Activated CD8-positive, alpha-beta T cell treated with anti-CD3 and anti-CD28 coated beads, Interleukin-2, amount 10 ng/mL, durations not matched to agents 7 days and 5 days (primary cell): ENCODE measurements at regions of chr1 and their contacts with region 1.

Region 1: DNA sequence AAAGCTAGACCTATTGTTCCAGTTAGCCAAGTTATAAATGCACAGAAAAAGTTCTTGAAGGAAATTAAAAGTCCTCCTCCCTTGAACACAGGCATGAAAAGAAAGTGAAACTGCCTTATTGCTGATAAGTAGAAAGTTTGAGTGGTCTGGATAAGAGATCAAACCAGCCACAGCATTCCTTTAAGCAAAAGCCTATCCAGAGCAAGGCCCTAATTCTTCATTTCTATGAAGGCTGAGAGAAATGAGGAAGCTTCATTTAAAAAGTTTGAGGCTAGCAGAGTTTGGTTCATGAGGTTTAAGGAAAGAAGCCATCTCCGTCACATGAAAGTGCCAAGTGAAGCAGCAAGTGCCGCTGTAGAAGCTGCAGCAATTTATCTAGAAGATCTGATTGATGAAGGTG is 2.7 kb upstream of the SSX2IP start:
- DNase-seq: no peak
- ATAC-seq: no peak
- H3K4me3 Mint-ChIP-seq: peak overlapping the region; percentile 61
- H3K27ac Mint-ChIP-seq: peak overlapping the region; percentile 87
- H3K4me1 Mint-ChIP-seq: peaks cover 46% of the 10 kb centered on the region
- H3K27me3 Mint-ChIP-seq: no peaks in the 10 kb centered on the region

Region 2: DNA sequence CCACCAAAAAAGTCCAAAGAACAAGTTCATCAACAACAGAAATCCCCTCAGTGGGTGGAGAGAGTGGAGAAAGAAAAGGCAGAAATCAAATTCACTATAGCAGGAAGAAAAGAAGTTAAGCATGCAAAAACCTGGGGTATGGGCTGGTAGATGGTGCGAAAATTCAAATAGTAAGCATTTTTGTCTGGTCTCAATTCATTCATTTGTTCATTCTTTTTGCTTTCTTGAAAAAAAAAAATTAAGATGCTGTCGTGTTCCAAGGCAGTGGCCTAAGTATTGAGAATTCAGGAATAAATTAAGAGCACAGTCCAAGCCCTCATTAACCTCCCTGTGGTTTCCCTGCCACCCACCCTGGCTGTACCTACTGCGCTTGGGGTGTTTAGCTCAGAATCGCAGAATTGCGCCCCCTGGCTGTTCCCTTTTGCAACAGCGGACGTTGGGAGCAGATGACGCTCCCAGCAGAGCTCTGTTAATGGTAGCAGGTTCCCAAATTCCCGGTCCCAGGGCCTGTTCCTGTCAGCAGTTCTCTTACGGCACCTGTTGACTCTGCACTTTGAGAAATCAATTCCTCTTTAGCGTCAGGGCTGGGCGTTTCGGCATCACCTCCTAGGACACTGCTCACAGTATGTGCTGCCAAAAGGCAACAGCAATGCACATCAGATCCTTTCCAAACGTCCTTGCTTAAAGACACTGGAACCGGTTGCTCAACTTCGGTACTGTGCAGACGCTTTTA is 31.3 kb after region 1 on chr1:
- CTCF ChIA-PET with region 1: interaction called, 13 read pairs
- POLR2A ChIA-PET with region 1: no interaction called
- DNase-seq: peak; percentile 53
- ATAC-seq: peak; percentile 53
- H3K4me3 Mint-ChIP-seq: no peak overlapping the region
- H3K27ac Mint-ChIP-seq: no peak overlapping the region
- H3K4me1 Mint-ChIP-seq: no peaks in the 10 kb centered on the region
- H3K27me3 Mint-ChIP-seq: peaks cover 18% of the 10 kb centered on the region